Posterior vena cava (tissue), 2 donors: ENCODE measurements at regions of chr9 and their contacts with region 1.

Region 1: DNA sequence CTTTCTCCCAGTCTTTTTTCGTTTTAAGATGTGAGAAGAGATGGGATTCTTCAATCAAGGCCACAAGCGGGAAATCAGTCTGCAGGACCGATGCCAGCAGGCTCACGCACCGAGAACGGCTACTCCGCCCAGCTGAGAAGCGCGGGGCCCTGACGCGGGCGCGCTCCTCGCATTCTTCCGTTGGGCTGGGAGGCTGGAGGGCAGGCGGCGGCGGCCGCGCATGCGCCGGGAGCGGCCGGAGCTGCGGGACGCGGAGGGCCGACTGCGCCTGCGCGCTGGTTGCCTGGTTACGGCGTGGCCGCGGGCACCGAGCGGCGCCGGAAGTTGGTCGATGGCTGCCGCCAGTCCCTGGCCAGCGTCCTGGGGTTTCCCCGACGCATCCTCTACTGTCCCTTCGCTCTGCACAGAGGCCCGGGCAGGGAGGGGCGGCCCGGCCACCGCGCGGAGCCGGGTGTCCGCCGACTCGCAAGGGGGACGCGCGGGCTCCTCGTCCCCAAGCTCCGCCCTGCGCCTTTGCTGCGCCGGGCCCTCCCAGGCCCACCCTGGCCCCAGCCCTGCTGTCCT is 831 bp upstream of the SEC16A start:
- DNase-seq: peak; percentile 98

Region 2: GRCh38 chr9:135951889-135952663 is 531.6 kb before region 1 on chr9:
- intact Hi-C with region 1: no loop called
- DNase-seq: no peak

Region 3: GRCh38 chr9:136521537-136521936 is 37.9 kb after region 1 on chr9:
- intact Hi-C with region 1: loop called in 1 of 2 experiments (anchors 5 kb)
- DNase-seq: peak; percentile 92

Region 4: GRCh38 chr9:136539427-136540421 is 56.1 kb after region 1 on chr9:
- intact Hi-C with region 1: loop called in 1 of 2 experiments (anchors 5 kb)
- DNase-seq: peak; percentile 97

Region 5: DNA sequence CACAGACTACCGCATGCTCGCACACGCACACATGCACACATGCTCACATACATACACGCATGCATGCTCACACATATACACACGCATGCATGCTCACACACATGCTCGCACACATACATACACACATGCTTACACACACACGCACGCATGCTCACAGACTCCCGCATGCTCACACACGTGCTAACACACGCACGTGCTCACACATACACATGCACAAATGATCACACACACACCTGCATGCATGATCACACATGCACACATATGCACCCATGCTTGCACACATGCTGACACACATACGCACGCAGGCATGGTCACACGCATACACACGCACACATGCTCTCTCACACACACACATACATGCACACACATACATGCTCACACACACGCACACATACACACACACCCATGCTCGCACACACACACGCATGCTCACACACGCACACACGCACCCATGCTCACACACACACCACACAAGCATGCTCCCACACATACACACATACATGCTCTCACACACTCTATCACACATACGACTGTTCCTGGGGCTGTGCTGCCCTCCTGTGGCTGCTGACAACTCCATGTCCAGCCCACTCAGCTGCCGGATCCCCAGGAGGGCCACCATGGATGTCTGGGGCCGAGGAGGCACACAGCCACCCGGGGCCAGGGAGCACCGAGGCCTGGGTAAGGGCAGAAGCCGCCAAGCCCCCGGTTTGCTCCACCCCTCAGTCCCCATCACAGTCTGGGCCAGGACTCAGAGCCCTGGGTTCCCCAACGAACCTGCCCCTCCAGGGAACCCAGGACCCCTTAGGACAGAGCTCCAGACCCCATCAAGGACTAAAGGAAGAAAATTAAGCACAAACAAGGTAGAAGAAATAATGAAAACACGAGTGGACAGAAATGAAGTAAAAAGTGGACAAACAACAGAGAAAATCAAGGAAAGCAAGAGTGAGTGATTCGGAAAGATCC is 147.6 kb after region 1 on chr9:
- intact Hi-C with region 1: loop called in 1 of 2 experiments (anchors 1 kb)
- DNase-seq: peak; percentile 94